ENCODE measurements at regions of chr11 and their contacts with region 1.

Region 1: GRCh38 chr11:120172054-120172911 is 34.4 kb upstream of the TRIM29 start:
- DNase-seq: peak; percentile 52
- H3K4me3 ChIP-seq: no peak overlapping the region
- H3K27ac ChIP-seq: no peak overlapping the region
- H3K4me1 ChIP-seq: peaks cover 16% of the 10 kb centered on the region
- H3K27me3 ChIP-seq: no peaks in the 10 kb centered on the region
- CTCF ChIP-seq: peak; percentile 65 to 93

Region 2: DNA sequence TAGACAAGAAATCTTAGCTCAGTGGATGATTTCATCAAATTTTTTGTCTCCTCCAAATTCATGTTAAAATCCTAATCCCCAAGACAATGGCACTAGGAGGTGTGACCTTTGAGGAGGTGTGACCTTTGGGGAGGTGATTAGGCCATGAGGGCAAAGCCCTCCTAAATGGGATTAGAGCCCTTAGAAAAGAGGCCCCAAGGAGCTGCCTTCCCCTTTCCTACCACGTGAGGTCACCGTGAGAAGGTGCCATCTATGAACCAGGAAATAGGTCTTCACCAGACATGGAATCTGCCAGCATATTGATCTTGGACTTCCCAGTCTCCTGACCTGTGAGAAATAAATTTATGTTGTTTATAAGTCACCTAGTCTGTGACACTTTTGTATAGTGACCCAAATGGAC is 173.1 kb before region 1 on chr11:
- CTCF ChIA-PET with region 1: no interaction called
- dilution Hi-C with region 1: no loop called
- in situ Hi-C with region 1: no loop called
- intact Hi-C with region 1: loop called (anchors 1 kb)
- DNase-seq: peak; percentile 6
- H3K4me3 ChIP-seq: no peak overlapping the region
- H3K27ac ChIP-seq: no peak overlapping the region
- H3K4me1 ChIP-seq: peaks cover 9% of the 10 kb centered on the region
- H3K27me3 ChIP-seq: no peaks in the 10 kb centered on the region
- CTCF ChIP-seq: peak; percentile 40 to 56

Region 3: GRCh38 chr11:120024046-120024445 is 148.2 kb before region 1 on chr11:
- CTCF ChIA-PET with region 1: no interaction called
- dilution Hi-C with region 1: no loop called
- in situ Hi-C with region 1: no loop called
- intact Hi-C with region 1: no loop called
- DNase-seq: no peak
- H3K4me3 ChIP-seq: no peak overlapping the region
- H3K27ac ChIP-seq: no peak overlapping the region
- H3K4me1 ChIP-seq: peaks cover 11% of the 10 kb centered on the region
- H3K27me3 ChIP-seq: no peaks in the 10 kb centered on the region
- CTCF ChIP-seq: no peak

Region 4: DNA sequence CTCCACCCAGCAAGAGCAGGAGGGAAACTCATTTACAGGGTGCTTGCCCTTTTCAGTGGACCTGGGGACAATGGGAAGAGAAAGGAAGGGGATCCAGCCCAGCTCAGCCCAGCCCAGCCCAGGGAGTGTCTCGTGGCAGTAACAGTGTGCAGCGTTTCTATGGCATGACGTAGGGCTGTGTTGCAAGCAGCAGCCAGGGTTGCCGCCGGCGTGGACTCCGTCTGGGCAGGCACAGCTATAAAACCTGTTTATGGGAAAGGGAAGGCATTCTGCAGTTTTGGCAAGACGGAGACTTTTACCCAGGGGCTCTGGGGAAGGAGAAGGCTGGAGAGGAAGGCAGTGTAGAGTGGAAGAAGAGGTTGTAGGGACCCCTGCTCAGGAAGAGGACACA is 43.5 kb before region 1 on chr11:
- CTCF ChIA-PET with region 1: no interaction called
- dilution Hi-C with region 1: loop called (anchors 5 kb)
- in situ Hi-C with region 1: loop called in 1 of 2 experiments (anchors 5 kb)
- intact Hi-C with region 1: loop called (anchors 2 kb)
- DNase-seq: peak; percentile 95
- H3K4me3 ChIP-seq: peak overlapping the region in 1 of 3 experiments; percentile 24
- H3K27ac ChIP-seq: peak overlapping the region; percentile 97
- H3K4me1 ChIP-seq: peaks cover 82% of the 10 kb centered on the region
- H3K27me3 ChIP-seq: no peaks in the 10 kb centered on the region
- CTCF ChIP-seq: no peak

Region 5: DNA sequence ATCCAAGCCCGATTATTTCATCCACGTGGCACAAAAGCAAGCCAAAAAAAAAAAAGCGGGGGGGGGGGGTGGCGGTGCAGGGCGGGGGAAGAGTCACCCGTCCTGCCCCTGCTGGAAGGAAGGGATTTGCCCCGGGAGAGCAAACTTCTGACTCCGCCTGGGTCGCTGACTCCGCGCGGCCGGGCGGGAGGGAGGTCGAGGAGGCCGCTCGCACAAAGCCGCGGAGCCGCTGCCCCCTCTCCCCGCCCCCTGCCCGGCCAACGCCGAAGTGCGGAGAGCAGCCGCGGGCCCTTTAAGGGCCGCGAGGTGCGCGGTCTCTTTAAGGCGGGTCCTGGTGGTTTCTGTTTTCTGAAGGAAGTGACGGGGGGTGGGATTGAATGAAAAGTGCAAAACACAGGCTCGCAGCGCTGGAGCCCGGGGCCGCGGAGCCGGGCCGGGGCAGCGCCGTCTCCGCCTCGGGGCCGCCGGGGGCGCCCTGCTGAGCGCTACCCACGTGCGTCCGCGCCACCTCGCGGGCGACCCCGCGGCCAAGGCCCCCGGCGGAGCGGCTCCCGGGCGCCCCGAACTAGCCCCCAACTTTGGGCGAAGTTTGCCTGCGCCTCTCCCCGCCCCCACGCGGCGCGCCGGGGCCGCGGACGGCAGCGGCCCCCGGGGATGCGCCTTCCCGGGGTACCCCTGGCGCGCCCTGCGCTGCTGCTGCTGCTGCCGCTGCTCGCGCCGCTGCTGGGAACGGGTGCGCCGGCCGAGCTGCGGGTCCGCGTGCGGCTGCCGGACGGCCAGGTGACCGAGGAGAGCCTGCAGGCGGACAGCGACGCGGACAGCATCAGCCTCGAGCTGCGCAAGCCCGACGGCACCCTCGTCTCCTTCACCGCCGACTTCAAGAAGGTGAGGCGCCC is 38.6 kb after region 1 on chr11 and contains the start of gene OAF:
- CTCF ChIA-PET with region 1: no interaction called
- dilution Hi-C with region 1: no loop called
- in situ Hi-C with region 1: no loop called
- intact Hi-C with region 1: loop called (anchors 1 kb)
- DNase-seq: peak; percentile 80
- H3K4me3 ChIP-seq: peak within 1 kb of the TSS; percentile 53 to 63 (median 63)
- H3K27ac ChIP-seq: peak within 1 kb of the TSS; percentile 59
- H3K4me1 ChIP-seq: peaks cover 17% of the 10 kb centered on the region
- H3K27me3 ChIP-seq: no peaks in the 10 kb centered on the region
- CTCF ChIP-seq: peak; percentile 13 to 16
- total RNA-seq, gene OAF: 4.7 to 20.3 TPM

Region 6: DNA sequence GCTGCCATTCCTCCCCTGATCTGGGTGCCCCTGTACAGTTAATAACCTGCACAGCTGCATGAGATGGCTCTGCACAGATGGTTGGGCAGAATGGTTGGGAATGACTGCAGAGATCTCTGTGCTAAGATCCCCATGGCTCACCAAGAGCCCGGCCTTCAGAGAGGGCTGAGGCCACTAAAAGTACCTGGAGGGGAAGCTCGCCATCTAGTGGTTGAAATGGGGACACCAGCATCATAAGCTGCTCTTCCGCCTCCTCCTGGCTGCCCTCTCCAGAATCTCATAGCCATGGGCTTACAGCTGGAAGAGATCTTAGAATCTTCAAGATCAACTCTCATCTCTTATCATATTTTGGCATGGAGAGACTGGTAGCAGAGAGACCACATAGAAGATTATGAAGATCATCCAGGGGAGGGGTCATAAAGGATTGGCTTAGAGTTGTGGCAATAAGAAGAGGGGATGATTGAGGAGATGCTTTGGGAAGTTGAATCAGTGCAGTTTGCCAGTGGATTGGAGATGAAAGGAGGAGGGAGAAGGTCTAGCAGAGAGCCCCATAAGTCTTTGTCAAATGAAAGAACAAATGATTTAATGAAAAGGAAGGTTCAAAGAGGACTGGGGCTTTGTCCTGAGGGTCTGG is 130.8 kb after region 1 on chr11:
- CTCF ChIA-PET with region 1: no interaction called
- dilution Hi-C with region 1: no loop called
- in situ Hi-C with region 1: loop called (anchors 5 kb)
- intact Hi-C with region 1: loop called (anchors 1 kb)
- DNase-seq: peak; percentile 71
- H3K4me3 ChIP-seq: no peak overlapping the region
- H3K27ac ChIP-seq: no peak overlapping the region
- H3K4me1 ChIP-seq: peaks cover 39% of the 10 kb centered on the region
- H3K27me3 ChIP-seq: no peaks in the 10 kb centered on the region
- CTCF ChIP-seq: peak; percentile 97 to 98

Measured in mammary epithelial cell (primary cell).